PC-9 (cell line): ENCODE measurements at regions of chr16 and their contacts with region 1.

Region 1: DNA sequence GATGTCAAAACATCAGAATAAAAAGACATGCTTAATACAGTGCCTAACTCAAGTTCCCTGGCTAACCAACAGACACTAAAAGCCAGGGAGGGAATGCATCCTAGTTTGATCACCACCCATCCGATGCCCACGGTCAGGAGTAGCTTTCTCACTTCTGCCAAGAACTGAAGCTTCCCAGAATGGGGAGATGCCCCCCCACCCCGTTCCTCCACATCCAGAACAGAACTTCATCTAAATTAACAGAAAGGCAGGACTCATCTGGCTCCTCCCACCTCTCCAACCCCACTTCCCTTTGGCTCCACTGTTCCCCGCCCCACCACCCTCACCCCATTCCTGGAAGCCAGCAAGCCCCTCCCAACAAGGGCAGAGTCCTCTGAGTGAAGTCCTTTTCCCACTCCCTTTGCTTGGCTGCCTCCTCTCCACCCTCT is 33.7 kb downstream of the GDE1 start:
- DNase-seq: no peak
- H3K4me3 ChIP-seq: no peak overlapping the region
- H3K27ac ChIP-seq: no peak overlapping the region
- H3K4me1 ChIP-seq: 0 out of 2 replicates have a peak, but pooled peaks cover 5% of the 10 kb centered on the region
- H3K27me3 ChIP-seq: no peaks in the 10 kb centered on the region
- CTCF ChIP-seq: no peak

Region 2: DNA sequence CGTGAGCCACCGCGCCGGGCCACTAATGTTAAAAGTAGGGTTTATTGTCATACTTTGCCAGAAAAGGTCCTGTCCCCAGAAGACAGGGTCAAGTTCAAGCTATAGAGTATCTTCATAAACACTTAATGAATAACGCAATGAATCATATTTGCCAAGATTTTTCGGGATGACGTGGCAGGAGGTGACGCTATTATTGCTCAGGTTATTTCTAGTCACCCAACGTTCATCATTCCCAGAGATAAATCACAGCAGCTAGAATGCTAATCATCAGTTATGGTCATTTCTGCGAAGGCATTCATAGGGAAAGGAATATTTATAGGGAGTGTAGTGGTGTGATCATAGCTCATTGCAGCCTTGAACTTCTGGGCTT is 68.6 kb before region 1 on chr16:
- CTCF ChIA-PET with region 1: no interaction called
- POLR2A ChIA-PET with region 1: interaction called, 14 read pairs
- intact Hi-C with region 1: no loop called
- DNase-seq: peak; percentile 71 to 96
- H3K4me3 ChIP-seq: 0 out of 2 replicates have a peak overlapping the region, but pooled peaks have one; percentile 21
- H3K27ac ChIP-seq: peak overlapping the region; percentile 87
- H3K4me1 ChIP-seq: peaks cover 47% of the 10 kb centered on the region
- H3K27me3 ChIP-seq: no peaks in the 10 kb centered on the region
- CTCF ChIP-seq: no peak